Stomach (tissue), 19 donors: ENCODE measurements at regions of chr13 and their contacts with region 1.

Region 1: GRCh38 chr13:28329395-28330158 is 165.4 kb downstream of the FLT1 start:
- DNase-seq: no peak
- H3K4me3 ChIP-seq: no peak overlapping the region
- H3K27ac ChIP-seq: no peak overlapping the region
- H3K4me1 ChIP-seq: no peaks in the 10 kb centered on the region
- H3K27me3 ChIP-seq: peaks cover 0 to 21% (median 0%) of the 10 kb centered on the region in 3 donors
- CTCF ChIP-seq: no peak
- EP300 ChIP-seq: no peak
- POLR2A ChIP-seq: no peak

Region 2: GRCh38 chr13:28258417-28258816 is 71.2 kb before region 1 on chr13:
- intact Hi-C with region 1: no loop called
- DNase-seq: peak in 1 of 2 donors; percentile 23
- H3K4me3 ChIP-seq: no peak overlapping the region
- H3K27ac ChIP-seq: peak overlapping the region in 2 of 5 donors; percentile 16 to 41
- H3K4me1 ChIP-seq: peaks cover 0 to 13% (median 6%) of the 10 kb centered on the region in 4 donors
- H3K27me3 ChIP-seq: no peaks in the 10 kb centered on the region
- CTCF ChIP-seq: no peak
- EP300 ChIP-seq: no peak
- POLR2A ChIP-seq: no peak

Region 3: DNA sequence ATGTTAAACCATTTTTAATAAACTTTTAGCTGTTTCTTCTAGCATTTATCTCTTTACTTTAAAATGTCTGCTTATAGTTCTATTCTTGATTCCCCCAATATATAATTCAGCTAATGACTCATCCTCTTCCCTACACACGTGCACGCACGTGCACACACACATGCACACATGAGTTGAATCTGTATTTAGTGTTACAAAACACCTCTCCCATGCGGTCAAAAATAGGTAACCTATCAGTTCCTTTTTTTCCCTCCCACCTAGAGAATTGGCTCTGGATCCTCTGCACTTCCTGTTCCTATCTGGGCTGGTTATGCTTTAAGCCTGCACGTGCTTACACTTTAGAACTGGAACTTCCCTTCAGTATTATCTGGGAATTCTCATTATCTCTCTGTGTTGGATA is 47.1 kb before region 1 on chr13:
- intact Hi-C with region 1: no loop called
- DNase-seq: no peak
- H3K4me3 ChIP-seq: no peak overlapping the region
- H3K27ac ChIP-seq: no peak overlapping the region
- H3K4me1 ChIP-seq: no peaks in the 10 kb centered on the region
- H3K27me3 ChIP-seq: no peaks in the 10 kb centered on the region
- CTCF ChIP-seq: no peak
- EP300 ChIP-seq: no peak
- POLR2A ChIP-seq: no peak

Region 4: GRCh38 chr13:28415994-28416421 is 86.4 kb after region 1 on chr13:
- intact Hi-C with region 1: no loop called
- DNase-seq: no peak
- H3K4me3 ChIP-seq: no peak overlapping the region
- H3K27ac ChIP-seq: no peak overlapping the region
- H3K4me1 ChIP-seq: no peaks in the 10 kb centered on the region
- H3K27me3 ChIP-seq: peaks cover 0 to 7% (median 0%) of the 10 kb centered on the region in 3 donors
- CTCF ChIP-seq: no peak
- EP300 ChIP-seq: no peak
- POLR2A ChIP-seq: no peak

Region 5: GRCh38 chr13:28623782-28624706 is 294.5 kb after region 1 on chr13:
- intact Hi-C with region 1: loop called (anchors 10 kb)
- DNase-seq: no peak
- H3K4me3 ChIP-seq: no peak overlapping the region
- H3K27ac ChIP-seq: no peak overlapping the region
- H3K4me1 ChIP-seq: no peaks in the 10 kb centered on the region
- H3K27me3 ChIP-seq: peaks cover 0 to 13% (median 0%) of the 10 kb centered on the region in 3 donors
- CTCF ChIP-seq: no peak
- EP300 ChIP-seq: no peak
- POLR2A ChIP-seq: no peak